Activated CD4-positive, alpha-beta memory T cell treated with anti-CD3 and anti-CD28 coated beads for 36 hours (primary cell): ENCODE measurements at regions of chr6 and their contacts with region 1.

Region 1: DNA sequence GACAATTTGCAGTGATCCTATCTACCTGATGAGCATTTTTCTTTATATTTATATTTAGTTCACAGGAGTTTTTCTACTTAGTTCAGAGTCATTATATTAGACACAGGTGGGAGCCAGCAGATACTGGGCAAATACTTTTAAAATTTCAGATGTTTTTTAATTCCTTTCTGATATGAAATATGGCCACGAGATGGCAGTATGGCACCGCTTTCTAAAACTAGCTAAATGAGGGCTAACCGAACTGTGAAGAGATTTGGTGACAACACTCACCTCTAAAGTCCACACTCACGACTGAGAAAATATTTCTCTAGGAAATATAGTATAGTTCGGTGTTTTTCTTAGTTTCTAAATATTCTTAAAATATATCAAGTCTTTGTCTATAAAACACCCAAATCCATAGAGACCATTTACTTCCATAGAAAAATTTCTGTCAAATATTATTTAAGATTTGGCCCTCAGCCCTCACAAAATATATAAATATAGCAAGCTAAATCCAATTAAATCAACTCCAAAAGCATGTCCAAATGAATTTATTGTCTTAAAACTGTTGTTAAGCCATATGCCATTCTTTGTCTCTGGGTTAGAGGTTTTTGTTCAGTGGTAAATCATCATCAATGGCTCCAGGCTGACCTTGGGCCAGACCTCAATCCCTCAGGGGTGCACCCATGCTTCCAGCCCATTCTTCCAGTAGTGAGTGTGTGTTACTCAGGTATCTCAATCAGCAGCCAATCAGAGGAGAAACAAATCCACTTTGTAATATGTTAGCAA is 63.6 kb downstream of the HUS1B start:
- DNase-seq: peak; percentile 75
- H3K4me3 Mint-ChIP-seq: no peak overlapping the region
- H3K27ac Mint-ChIP-seq: no peak overlapping the region
- H3K4me1 Mint-ChIP-seq: peaks cover 5% of the 10 kb centered on the region
- H3K27me3 Mint-ChIP-seq: no peaks in the 10 kb centered on the region

Region 2: DNA sequence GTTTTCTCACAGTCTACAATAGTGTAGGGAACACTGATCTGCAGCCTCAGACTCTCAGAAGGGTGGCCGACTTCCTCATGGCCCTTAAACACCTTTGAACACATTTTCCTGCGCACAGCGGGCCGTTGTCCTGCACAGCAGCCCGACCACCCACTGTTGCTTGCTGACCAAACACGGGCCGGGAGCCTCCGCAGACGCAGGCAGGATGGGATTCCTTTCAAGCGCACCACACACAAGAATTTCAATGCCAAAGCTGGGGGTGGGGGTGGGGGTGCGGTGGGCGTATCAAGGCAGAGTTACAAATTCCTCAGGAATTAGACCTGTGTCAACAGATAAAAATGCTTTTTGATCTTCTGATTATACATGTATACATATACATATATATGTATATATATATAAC is 11.0 kb before region 1 on chr6:
- CTCF ChIA-PET with region 1: interaction called, 26 read pairs
- POLR2A ChIA-PET with region 1: no interaction called
- intact Hi-C with region 1: no loop called
- DNase-seq: no peak
- H3K4me3 Mint-ChIP-seq: no peak overlapping the region
- H3K27ac Mint-ChIP-seq: no peak overlapping the region
- H3K4me1 Mint-ChIP-seq: peaks cover 18% of the 10 kb centered on the region
- H3K27me3 Mint-ChIP-seq: no peaks in the 10 kb centered on the region

Region 3: DNA sequence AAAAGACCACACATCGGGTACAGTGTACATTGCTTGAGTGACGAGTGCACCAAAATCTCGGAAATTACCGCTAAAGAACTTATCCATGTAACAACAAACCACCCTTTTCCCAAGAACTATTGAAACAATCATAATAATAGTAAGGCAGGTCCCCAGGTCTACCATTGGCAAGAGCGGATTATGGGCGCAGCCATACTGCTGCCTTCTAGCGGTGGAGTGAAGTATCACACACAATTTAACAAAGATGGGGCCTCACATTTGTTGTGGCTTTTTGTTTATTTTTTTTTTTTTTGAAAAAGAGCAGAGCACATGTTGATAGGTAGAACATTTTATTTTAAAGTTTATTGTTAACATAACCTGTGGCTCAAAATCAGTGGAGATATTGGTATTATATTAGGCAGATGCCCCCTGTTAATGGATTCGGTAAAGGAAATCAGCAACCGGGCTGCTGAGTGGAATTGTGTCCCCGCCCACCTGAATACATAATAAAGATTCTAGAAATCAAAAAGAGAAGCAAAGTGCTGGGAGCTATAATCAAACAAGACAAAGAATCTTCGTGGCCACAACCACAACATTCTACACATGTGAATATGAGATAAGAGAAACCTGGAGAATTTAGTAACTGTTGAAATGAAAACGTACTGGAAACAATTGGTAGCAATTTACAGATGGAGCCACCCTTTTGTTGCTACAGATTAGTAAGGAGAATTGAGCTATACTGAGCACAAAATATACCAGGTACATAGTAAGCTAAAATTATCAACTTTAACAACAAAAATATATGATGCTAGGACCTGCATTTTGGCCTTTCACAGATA is 193.8 kb after region 1 on chr6:
- CTCF ChIA-PET with region 1: interaction called, 20 read pairs
- POLR2A ChIA-PET with region 1: no interaction called
- intact Hi-C with region 1: loop called (anchors 1 kb)
- DNase-seq: peak; percentile 37
- H3K4me3 Mint-ChIP-seq: no peak overlapping the region
- H3K27ac Mint-ChIP-seq: no peak overlapping the region
- H3K4me1 Mint-ChIP-seq: peaks cover 17% of the 10 kb centered on the region
- H3K27me3 Mint-ChIP-seq: peaks cover 10% of the 10 kb centered on the region

Region 4: GRCh38 chr6:894274-894673 is 301.0 kb after region 1 on chr6:
- CTCF ChIA-PET with region 1: no interaction called
- POLR2A ChIA-PET with region 1: no interaction called
- intact Hi-C with region 1: loop called (anchors 10 kb)
- DNase-seq: peak; percentile 20
- H3K4me3 Mint-ChIP-seq: no peak overlapping the region
- H3K27ac Mint-ChIP-seq: no peak overlapping the region
- H3K4me1 Mint-ChIP-seq: no peaks in the 10 kb centered on the region
- H3K27me3 Mint-ChIP-seq: peaks cover 6% of the 10 kb centered on the region

Region 5: DNA sequence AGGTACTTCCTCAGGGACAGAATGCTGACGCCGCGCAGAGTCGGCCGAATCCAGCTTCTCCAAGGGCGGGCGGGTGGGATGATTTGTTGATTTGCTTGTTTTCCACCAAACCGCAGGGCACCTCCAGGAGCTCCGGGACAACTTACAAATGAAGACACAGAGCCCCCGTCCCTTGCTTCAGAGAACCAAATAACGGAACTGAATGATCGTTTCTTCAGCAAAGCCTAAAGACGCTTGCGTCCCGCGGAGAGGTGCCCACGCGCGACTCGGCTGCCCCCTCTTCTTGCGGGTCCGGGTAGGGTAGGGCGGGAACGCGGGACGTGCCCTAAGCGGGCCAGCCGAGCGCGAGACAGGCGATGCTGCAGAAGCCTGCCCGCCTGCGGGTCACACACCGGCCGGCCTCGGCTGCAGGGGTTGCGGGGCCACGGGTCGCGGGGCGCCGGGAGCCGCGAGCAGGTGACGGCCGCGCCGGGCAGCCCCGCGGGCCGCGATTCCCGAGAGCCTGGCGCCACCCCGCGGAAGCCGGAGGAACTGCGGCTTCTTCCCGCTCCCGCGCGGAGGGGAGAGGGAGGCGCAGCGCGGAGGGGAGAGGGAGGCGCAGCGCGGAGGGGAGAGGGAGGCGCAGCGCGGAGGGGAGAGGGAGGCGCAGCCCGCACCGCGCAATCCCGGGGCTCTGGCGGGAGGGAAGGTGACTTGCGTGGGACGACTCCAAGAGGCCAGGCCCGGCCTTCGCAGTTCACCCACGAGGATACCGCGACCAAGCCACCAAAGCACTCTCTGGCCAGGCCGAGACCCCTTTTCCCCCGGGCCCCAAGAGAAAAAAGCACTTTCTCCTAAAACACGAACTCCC is 788.4 kb after region 1 on chr6:
- CTCF ChIA-PET with region 1: interaction called, 12 read pairs
- POLR2A ChIA-PET with region 1: no interaction called
- intact Hi-C with region 1: loop called (anchors 5 kb)
- DNase-seq: peak; percentile 72
- H3K4me3 Mint-ChIP-seq: no peak overlapping the region
- H3K27ac Mint-ChIP-seq: no peak overlapping the region
- H3K4me1 Mint-ChIP-seq: peaks cover 31% of the 10 kb centered on the region
- H3K27me3 Mint-ChIP-seq: peaks cover 70% of the 10 kb centered on the region

Region 6: GRCh38 chr6:1396952-1397868 is 803.9 kb after region 1 on chr6:
- CTCF ChIA-PET with region 1: interaction called, 28 read pairs
- POLR2A ChIA-PET with region 1: no interaction called
- intact Hi-C with region 1: loop called (anchors 2 kb)
- DNase-seq: peak; percentile 77
- H3K4me3 Mint-ChIP-seq: peak overlapping the region; percentile 12
- H3K27ac Mint-ChIP-seq: no peak overlapping the region
- H3K4me1 Mint-ChIP-seq: peaks cover 6% of the 10 kb centered on the region
- H3K27me3 Mint-ChIP-seq: peaks cover 45% of the 10 kb centered on the region

Region 7: DNA sequence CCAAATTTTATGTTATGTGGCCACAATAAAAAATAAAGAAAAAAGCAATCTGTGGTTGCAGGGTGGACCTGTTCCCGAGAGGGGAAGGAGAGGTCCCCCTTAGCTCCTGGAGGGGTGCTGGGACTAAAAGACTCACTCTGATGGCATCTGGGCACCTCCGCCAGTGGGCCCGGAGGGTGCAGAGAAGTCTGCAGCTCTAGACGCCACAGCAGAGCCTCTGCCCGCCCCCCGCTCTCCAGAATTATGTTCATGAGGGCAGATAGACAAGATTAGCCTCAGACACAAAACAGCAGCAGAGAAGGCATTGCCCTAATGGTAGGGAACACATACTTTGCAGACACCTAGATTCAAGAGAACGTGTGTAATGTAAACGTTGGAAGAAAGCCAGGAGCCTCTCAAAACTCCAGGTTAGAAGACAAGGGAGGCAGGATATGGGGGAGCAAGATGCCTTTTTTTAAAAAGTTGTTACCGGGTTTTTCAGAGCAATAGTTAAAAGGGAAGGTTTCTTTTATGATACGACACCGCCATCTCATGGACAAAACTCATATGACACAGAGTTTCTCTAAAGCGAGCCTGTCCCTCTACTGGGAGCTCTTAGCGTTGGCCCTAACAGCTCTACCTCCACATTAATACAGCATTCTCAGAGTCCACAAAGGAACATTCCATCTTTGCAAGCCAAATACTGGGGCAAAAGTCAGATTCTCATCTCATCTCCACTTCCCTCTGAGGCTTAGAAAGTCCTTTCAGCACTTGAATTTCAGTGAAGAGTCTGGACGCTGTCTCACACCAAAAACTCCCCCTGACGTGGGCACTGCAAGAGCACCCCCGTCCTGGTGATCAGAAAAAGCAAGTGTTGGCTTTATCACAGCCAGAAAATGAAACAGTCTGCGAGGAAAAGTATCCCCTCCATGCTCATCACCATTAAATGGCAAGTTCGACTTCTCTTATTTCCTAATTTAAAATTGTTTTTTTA is 843.3 kb after region 1 on chr6:
- CTCF ChIA-PET with region 1: interaction called, 17 read pairs
- POLR2A ChIA-PET with region 1: no interaction called
- intact Hi-C with region 1: no loop called
- DNase-seq: peak; percentile 32
- H3K4me3 Mint-ChIP-seq: no peak overlapping the region
- H3K27ac Mint-ChIP-seq: no peak overlapping the region
- H3K4me1 Mint-ChIP-seq: no peaks in the 10 kb centered on the region
- H3K27me3 Mint-ChIP-seq: peaks cover 35% of the 10 kb centered on the region